ENCODE measurements at regions of chr5 and their contacts with region 1.

Region 1: DNA sequence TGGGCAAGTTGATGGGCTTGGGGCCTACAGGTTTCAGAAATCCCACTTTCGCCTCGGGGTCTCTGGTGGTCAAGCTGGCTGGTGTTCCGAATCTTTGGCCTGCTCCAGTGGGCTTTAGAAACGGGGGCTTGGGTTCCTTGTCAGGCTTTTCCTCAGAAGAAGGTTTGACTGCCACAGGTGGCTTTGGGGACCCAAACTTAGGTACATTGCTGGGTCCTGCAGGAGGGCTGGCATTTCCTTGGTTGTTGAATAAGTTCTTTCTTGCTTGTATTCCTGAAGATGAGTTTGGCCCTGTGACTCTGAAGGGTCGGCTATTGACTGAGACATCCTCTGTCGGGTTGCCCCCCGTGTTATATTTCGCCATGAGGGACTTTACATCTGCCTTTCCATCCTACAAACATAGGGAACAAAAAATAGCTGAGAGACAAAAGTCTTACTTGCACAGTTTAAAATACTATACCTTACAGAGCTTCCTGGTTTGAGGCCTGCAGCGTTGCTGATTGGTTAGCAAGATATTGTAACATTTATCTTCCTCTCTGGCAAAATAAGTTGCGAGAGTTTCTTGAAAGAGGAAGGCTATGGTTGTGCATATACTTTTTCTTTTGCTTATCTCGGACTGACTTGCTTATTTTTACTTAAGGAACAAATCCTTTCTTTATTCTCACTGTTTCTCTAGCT is 16.6 kb downstream of the FYB1 start:
- DNase-seq: peak in 4 of 9 experiments; percentile 49 to 77 (median 64)
- ATAC-seq: peak; percentile 58
- H3K4me3 ChIP-seq: peak overlapping the region; percentile 48 to 75
- H3K4me3 Mint-ChIP-seq: peak overlapping the region; percentile 93
- H3K27ac ChIP-seq: peak overlapping the region; percentile 70 to 88
- H3K27ac Mint-ChIP-seq: peak overlapping the region; percentile 96
- H3K4me1 ChIP-seq: peaks cover 48% of the 10 kb centered on the region
- H3K4me1 Mint-ChIP-seq: peaks cover 57% of the 10 kb centered on the region
- H3K27me3 ChIP-seq: no peaks in the 10 kb centered on the region
- H3K27me3 Mint-ChIP-seq: no peaks in the 10 kb centered on the region
- CTCF ChIP-seq: no peak

Region 2: DNA sequence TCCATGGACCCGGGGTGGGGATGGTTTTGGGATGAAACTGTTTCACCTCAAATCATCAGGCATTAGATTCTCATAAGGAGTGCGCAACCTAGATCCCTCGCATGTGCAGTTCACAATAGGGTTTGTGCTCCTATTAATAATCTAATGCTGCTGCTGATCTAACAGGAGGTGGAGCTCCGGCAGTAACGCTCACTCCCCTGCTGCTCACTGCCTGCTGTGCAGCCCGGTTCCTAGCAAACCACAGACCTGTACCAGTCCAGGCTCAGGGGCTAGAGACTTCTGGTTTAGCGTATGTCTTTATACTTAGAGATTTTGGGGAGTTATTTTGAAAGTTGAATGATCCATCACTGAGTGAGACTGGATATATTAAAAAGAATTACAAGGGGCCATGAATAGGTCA is 178.7 kb before region 1 on chr5:
- CTCF ChIA-PET with region 1: no interaction called
- POLR2A ChIA-PET with region 1: no interaction called
- intact Hi-C with region 1: no loop called
- DNase-seq: peak in 3 of 9 experiments; percentile 14 to 33 (median 24)
- ATAC-seq: peak; percentile 51
- H3K4me3 ChIP-seq: no peak overlapping the region
- H3K4me3 Mint-ChIP-seq: no peak overlapping the region
- H3K27ac ChIP-seq: no peak overlapping the region
- H3K27ac Mint-ChIP-seq: no peak overlapping the region
- H3K4me1 ChIP-seq: peaks cover 27% of the 10 kb centered on the region
- H3K4me1 Mint-ChIP-seq: peaks cover 66% of the 10 kb centered on the region
- H3K27me3 ChIP-seq: no peaks in the 10 kb centered on the region
- H3K27me3 Mint-ChIP-seq: no peaks in the 10 kb centered on the region
- CTCF ChIP-seq: no peak

Region 3: DNA sequence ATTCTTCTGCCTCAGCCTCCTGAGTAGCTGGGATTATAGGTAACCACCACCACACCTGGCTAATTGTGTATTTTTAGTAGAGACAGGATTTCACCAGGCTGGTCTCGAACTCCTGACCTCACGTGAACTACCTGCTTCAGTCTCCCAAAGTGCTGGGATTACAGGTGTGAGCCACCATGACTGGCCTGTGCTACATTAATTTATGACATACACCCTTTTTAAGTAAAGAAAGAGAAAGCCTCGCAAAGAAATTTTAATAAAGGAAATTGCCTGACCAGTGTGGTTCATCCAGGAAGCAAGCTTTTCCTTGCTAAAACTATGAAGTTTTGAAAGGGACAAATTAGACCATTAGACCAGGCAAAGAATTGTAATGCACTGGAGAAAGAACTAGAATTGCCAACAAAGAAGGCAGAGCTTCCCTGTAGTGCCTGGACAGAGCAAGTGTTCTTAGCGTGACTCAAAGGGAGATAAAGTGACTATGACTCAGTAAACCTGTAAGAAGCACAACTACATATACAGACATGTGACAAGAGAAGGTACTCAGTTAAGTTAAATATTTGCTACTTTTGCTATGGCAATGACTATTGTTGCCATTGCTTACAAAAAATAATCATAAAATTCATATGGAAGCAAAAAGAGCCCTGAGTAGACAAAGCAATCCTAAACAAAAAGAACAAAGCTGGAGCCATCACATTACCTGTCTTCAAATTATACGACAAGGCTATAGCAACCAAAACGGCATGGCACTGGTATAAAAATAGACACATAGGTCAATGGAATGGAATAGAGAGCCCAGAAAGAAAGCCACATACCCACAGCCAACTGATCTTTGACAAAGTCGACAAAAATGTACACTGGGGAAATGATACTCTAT is 38.0 kb before region 1 on chr5:
- CTCF ChIA-PET with region 1: interaction called, 10 read pairs
- POLR2A ChIA-PET with region 1: interaction called, 3 read pairs
- intact Hi-C with region 1: loop called in 1 of 2 experiments (anchors 1 kb)
- DNase-seq: peak in 2 of 9 experiments; percentile 56 to 70
- ATAC-seq: peak; percentile 73
- H3K4me3 ChIP-seq: no peak overlapping the region
- H3K4me3 Mint-ChIP-seq: peak overlapping the region; percentile 55
- H3K27ac ChIP-seq: peak overlapping the region; percentile 9 to 65
- H3K27ac Mint-ChIP-seq: peak overlapping the region; percentile 91
- H3K4me1 ChIP-seq: peaks cover 93% of the 10 kb centered on the region
- H3K4me1 Mint-ChIP-seq: peaks cover 90% of the 10 kb centered on the region
- H3K27me3 ChIP-seq: no peaks in the 10 kb centered on the region
- H3K27me3 Mint-ChIP-seq: no peaks in the 10 kb centered on the region
- CTCF ChIP-seq: no peak

Region 4: GRCh38 chr5:39187831-39188731 is 14.7 kb before region 1 on chr5:
- CTCF ChIA-PET with region 1: interaction called, 57 read pairs
- POLR2A ChIA-PET with region 1: interaction called, 44 read pairs
- intact Hi-C with region 1: loop called in 1 of 2 experiments (anchors 2 kb)
- DNase-seq: peak in 4 of 9 experiments; percentile 47 to 66 (median 56)
- ATAC-seq: peak; percentile 53
- H3K4me3 ChIP-seq: peak overlapping the region; percentile 6 to 29
- H3K4me3 Mint-ChIP-seq: peak overlapping the region; percentile 75
- H3K27ac ChIP-seq: peak overlapping the region; percentile 51 to 88
- H3K27ac Mint-ChIP-seq: peak overlapping the region; percentile 98
- H3K4me1 ChIP-seq: peaks cover 90% of the 10 kb centered on the region
- H3K4me1 Mint-ChIP-seq: peaks cover 90% of the 10 kb centered on the region
- H3K27me3 ChIP-seq: no peaks in the 10 kb centered on the region
- H3K27me3 Mint-ChIP-seq: no peaks in the 10 kb centered on the region
- CTCF ChIP-seq: no peak

Region 5: DNA sequence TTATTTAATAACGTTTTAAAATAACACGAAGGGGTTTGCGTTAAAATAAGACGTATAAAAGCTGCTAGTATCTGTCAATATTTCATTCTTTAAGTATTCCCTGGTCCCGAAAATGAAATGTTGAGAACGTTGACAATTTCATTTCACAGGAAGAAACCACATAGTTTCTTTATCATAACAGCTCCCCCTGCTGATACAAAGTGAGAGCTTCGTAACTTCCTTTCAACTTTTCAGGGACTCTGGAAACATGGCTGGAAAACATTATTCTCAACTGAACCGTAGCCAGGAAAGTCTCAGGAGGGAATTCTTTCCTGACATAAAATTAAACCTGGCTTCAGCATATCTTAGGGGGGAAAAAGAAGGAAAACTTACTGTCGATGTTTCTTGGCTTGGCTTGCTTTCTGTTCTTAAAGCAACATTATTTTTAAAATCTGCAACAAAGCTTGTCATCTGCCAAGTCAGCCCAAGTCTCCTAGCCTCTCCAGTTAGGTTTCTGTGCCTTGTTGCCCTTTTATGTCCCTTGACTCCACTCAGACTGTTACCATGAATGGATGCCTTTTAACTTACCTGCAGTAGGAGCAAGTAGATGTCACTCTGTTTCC is 344.9 kb after region 1 on chr5:
- CTCF ChIA-PET with region 1: interaction called, 8 read pairs
- POLR2A ChIA-PET with region 1: no interaction called
- intact Hi-C with region 1: loop called in 1 of 2 experiments (anchors 5 kb)
- DNase-seq: peak in 3 of 9 experiments; percentile 11 to 64 (median 45)
- ATAC-seq: peak; percentile 46
- H3K4me3 ChIP-seq: no peak overlapping the region
- H3K4me3 Mint-ChIP-seq: peak overlapping the region; percentile 43
- H3K27ac ChIP-seq: no peak overlapping the region
- H3K27ac Mint-ChIP-seq: no peak overlapping the region
- H3K4me1 ChIP-seq: no peaks in the 10 kb centered on the region
- H3K4me1 Mint-ChIP-seq: peaks cover 6% of the 10 kb centered on the region
- H3K27me3 ChIP-seq: no peaks in the 10 kb centered on the region
- H3K27me3 Mint-ChIP-seq: no peaks in the 10 kb centered on the region
- CTCF ChIP-seq: peak; percentile 72

Region 6: GRCh38 chr5:39624268-39624886 is 421.6 kb after region 1 on chr5:
- CTCF ChIA-PET with region 1: no interaction called
- POLR2A ChIA-PET with region 1: no interaction called
- intact Hi-C with region 1: no loop called
- DNase-seq: no peak
- ATAC-seq: no peak
- H3K4me3 ChIP-seq: no peak overlapping the region
- H3K4me3 Mint-ChIP-seq: no peak overlapping the region
- H3K27ac ChIP-seq: no peak overlapping the region
- H3K27ac Mint-ChIP-seq: no peak overlapping the region
- H3K4me1 ChIP-seq: no peaks in the 10 kb centered on the region
- H3K4me1 Mint-ChIP-seq: no peaks in the 10 kb centered on the region
- H3K27me3 ChIP-seq: no peaks in the 10 kb centered on the region
- H3K27me3 Mint-ChIP-seq: peaks cover 27% of the 10 kb centered on the region
- CTCF ChIP-seq: no peak